ENCODE measurements at regions of chr14 and their contacts with region 1.

Region 1: GRCh38 chr14:73825551-73826188 is 26.0 kb upstream of the PTGR2 start:
- DNase-seq: peak; percentile 27 to 73
- H3K4me3 ChIP-seq: no peak overlapping the region
- H3K27ac ChIP-seq: no peak overlapping the region
- H3K4me1 ChIP-seq: no peaks in the 10 kb centered on the region
- H3K27me3 ChIP-seq: no peaks in the 10 kb centered on the region; a peak in 1 of 7 replicates
- CTCF ChIP-seq: peak; percentile 70 to 85 (median 79)
- EP300 ChIP-seq: no peak
- POLR2A ChIP-seq: no peak
- RAD21 ChIP-seq: peak; percentile 79 to 87

Region 2: DNA sequence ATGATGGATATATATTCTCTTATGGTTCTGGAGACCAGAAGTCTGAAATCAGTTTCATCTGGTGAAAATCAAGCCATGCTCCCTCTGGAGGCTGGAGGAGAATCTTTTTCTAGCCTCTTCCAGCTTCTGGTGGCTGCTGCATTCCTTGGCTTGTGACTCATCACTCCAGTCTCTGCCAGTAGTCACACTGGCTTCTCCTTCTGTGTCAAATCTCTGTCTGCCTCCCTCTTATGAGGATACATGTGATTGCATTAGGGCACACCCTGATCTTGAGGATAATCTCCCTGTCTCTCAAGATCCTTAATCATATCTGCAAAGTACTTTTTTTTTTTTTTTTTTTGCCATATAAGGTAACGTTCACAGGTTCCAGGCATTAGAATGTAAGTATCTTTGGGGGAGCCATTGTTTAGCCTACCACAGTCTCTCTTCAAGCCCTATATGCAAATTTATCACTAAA is 163.2 kb before region 1 on chr14:
- CTCF ChIA-PET with region 1: no interaction called
- POLR2A ChIA-PET with region 1: no interaction called
- DNase-seq: peak in 1 of 2 experiments; percentile 39
- H3K4me3 ChIP-seq: no peak overlapping the region
- H3K27ac ChIP-seq: 0 out of 2 replicates have a peak overlapping the region, but pooled peaks have one; percentile 3
- H3K4me1 ChIP-seq: no peaks in the 10 kb centered on the region
- H3K27me3 ChIP-seq: no peaks in the 10 kb centered on the region
- CTCF ChIP-seq: peak in 2 of 3 experiments; percentile 33 to 62; a peak in 2 of 4 replicates
- EP300 ChIP-seq: no peak
- POLR2A ChIP-seq: no peak
- RAD21 ChIP-seq: peak in 1 of 2 experiments; percentile 26; a peak in 3 of 4 replicates

Region 3: DNA sequence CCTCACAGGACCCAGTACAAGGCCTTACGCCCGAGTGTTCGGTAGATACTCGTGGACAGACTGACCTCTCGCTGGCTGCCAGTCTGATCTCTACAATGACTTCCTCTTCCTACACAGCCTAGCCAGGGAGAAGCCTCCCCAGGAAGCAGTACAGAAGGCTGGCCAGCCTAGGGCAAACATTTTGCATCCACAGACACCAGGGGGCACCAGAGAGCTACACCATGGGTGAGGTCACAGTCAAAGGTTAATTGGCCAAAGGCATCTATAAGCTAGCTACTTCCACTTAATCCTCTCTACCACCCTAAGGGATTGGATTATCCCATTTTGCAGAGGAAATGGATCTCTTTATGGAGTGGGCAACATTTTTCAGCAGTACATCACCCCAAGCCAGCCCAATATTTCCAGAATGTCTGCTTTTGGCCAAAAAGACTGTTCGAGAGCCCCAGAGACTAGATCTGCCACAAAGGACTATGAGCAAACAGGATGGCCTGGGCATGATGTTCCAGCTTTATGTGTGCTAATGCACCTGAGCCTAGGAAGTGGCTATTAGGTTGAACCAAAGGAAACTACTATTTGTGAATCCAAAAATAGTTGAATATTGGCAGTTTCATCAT is 96.8 kb before region 1 on chr14:
- CTCF ChIA-PET with region 1: interaction called, 133 read pairs
- POLR2A ChIA-PET with region 1: no interaction called
- DNase-seq: peak; percentile 79 to 97
- H3K4me3 ChIP-seq: no peak overlapping the region
- H3K27ac ChIP-seq: no peak overlapping the region
- H3K4me1 ChIP-seq: peaks cover 0 to 6% (median 3%) of the 10 kb centered on the region in 4 experiments; a peak in 4 of 7 replicates
- H3K27me3 ChIP-seq: no peaks in the 10 kb centered on the region
- CTCF ChIP-seq: peak; percentile 96 to 97 (median 97)
- EP300 ChIP-seq: no peak
- POLR2A ChIP-seq: no peak
- RAD21 ChIP-seq: peak; percentile 96 to 97

Region 4: DNA sequence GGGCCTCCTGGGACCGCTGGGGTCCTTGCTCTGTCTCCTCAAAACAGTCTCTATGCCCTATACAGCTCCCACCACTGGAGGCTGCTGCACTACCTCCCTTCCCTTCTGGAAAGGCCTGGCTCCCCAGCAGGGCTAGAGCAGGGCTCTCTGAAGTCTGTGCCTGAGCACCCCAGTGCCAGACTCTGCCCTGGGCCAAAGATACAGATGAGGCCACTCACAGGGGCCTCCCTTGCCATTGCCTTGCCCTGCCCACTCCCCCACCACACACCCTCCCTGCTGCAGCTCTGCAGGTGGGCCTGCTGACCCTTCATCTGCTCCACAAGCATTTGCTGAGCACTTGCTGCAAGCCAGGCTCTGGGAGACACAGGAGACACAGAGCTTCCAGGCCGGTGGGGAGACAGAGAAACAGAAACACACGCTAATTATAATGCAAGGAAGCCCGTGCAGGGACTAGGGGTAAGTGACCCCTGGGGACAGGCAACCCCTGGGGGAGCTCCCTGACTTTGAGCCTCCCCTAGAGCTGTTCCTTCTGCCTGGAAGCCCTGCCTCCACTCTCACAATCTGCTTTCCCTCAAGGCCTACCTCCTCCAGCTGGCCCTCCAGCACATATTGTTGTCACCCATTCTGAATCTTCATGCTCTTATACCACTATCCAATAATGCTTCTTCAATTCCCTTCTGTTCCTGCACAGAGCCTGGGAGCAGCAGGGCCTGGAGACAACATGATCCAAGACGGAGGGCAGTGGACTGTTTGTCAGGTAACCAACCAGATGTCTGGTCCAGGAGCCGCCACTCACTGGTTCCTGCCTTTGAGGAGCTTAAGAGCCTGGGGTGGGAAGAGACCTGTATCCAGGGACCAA is 78.9 kb before region 1 on chr14:
- CTCF ChIA-PET with region 1: interaction called, 58 read pairs
- POLR2A ChIA-PET with region 1: no interaction called
- DNase-seq: no peak
- H3K4me3 ChIP-seq: no peak overlapping the region
- H3K27ac ChIP-seq: no peak overlapping the region
- H3K4me1 ChIP-seq: peaks cover 13 to 40% (median 26%) of the 10 kb centered on the region in 4 experiments
- H3K27me3 ChIP-seq: no peaks in the 10 kb centered on the region
- CTCF ChIP-seq: peak; percentile 42 to 60 (median 55)
- EP300 ChIP-seq: no peak
- POLR2A ChIP-seq: no peak
- RAD21 ChIP-seq: peak; percentile 57 to 68

Region 5: DNA sequence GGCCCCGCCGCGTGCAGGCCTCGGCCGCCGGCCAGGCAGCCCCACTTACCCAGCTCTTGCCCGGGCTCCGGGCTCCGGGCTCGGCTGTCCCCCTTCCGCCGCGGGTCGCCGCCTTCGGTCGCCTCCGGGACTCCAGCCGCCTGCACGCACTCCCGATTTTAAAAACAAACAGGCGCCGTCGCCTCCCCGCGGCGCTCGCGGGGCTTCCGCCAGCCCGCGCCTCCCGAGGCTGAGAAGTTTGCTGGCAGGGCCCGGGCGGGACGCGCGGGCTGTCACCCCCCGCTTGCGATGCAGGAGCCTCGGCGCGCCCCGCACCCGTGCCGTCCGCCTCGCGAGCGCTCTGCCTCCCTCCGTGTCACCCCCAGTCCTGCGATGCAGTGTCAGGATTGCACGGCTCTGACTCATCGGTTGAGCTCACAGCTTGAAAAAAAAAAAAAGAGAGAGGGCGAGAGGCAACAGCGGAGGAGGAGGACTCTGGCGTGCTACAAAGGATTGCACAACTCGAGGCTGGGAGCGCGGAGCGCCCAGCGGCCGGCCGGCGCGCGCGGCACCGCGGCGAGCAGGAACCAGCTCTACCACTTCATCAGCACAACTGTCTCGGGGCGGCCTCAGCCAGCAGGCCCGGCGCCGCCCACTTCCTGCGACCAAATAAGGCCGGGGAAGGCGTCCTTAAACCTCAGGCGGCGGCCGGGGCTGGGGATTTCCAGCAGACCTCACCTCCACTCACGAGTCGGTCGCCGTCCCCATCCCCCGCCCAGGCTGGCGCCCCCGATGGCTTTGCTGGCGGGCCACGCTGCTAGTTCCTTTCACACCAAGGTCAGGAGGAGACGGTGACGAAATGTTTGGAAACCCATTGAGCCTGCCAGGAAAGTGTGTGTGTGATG is 65.7 kb before region 1 on chr14:
- CTCF ChIA-PET with region 1: interaction called, 11 read pairs
- POLR2A ChIA-PET with region 1: no interaction called
- DNase-seq: peak; percentile 84 to 94
- H3K4me3 ChIP-seq: peak overlapping the region; percentile 55 to 74 (median 66)
- H3K27ac ChIP-seq: peak overlapping the region; percentile 69; the same call in 1 of the 2 replicates
- H3K4me1 ChIP-seq: peaks cover 11 to 35% (median 14%) of the 10 kb centered on the region in 4 experiments
- H3K27me3 ChIP-seq: peaks cover 0 to 15% (median 10%) of the 10 kb centered on the region in 4 experiments; a peak in 5 of 7 replicates
- CTCF ChIP-seq: no peak
- EP300 ChIP-seq: no peak
- POLR2A ChIP-seq: peak; percentile 85 to 93
- RAD21 ChIP-seq: no peak

Region 6: GRCh38 chr14:73785873-73786695 is 39.6 kb before region 1 on chr14:
- CTCF ChIA-PET with region 1: interaction called, 12 read pairs
- POLR2A ChIA-PET with region 1: no interaction called
- DNase-seq: peak in 1 of 2 experiments; percentile 62
- H3K4me3 ChIP-seq: peak overlapping the region; percentile 42 to 75 (median 71)
- H3K27ac ChIP-seq: no peak overlapping the region
- H3K4me1 ChIP-seq: peaks cover 7 to 21% (median 13%) of the 10 kb centered on the region in 4 experiments; a peak in 6 of 7 replicates
- H3K27me3 ChIP-seq: peaks cover 20 to 78% (median 62%) of the 10 kb centered on the region in 4 experiments
- CTCF ChIP-seq: peak in 1 of 3 experiments; percentile 2; a peak in 1 of 4 replicates
- EP300 ChIP-seq: no peak
- POLR2A ChIP-seq: no peak
- RAD21 ChIP-seq: no peak

Region 7: GRCh38 chr14:73809391-73809790 is 16.3 kb before region 1 on chr14:
- CTCF ChIA-PET with region 1: interaction called, 12 read pairs
- POLR2A ChIA-PET with region 1: interaction called, 3 read pairs
- DNase-seq: no peak
- H3K4me3 ChIP-seq: no peak overlapping the region
- H3K27ac ChIP-seq: no peak overlapping the region
- H3K4me1 ChIP-seq: no peaks in the 10 kb centered on the region
- H3K27me3 ChIP-seq: no peaks in the 10 kb centered on the region
- CTCF ChIP-seq: no peak
- EP300 ChIP-seq: no peak
- POLR2A ChIP-seq: no peak
- RAD21 ChIP-seq: no peak

Measured in H1 (cell line).